Naive thymus-derived CD4-positive, alpha-beta T cell (primary cell): ENCODE measurements at regions of chr10 and their contacts with region 1.

Region 1: GRCh38 chr10:90871766-90872647 is at the start of gene RPP30:
- DNase-seq: peak; percentile 71 to 83 (median 77)
- ATAC-seq: peak; percentile 99
- H3K4me3 ChIP-seq: peak within 1 kb of the TSS; percentile 83
- H3K4me3 Mint-ChIP-seq: peak within 1 kb of the TSS; percentile 94 to 99 (median 98)
- H3K27ac ChIP-seq: peak within 1 kb of the TSS; percentile 71
- H3K27ac Mint-ChIP-seq: peak within 1 kb of the TSS; percentile 73 to 95 (median 88)
- H3K4me1 ChIP-seq: peaks cover 14 to 23% of the 10 kb centered on the region in 2 donors
- H3K4me1 Mint-ChIP-seq: peaks cover 24 to 53% (median 37%) of the 10 kb centered on the region in 7 donors
- H3K27me3 ChIP-seq: no peaks in the 10 kb centered on the region
- H3K27me3 Mint-ChIP-seq: peaks cover 22 to 40% (median 34%) of the 10 kb centered on the region in 5 donors
- total RNA-seq, gene RPP30: 24.1 to 45.6 (median 38.0) TPM

Region 2: DNA sequence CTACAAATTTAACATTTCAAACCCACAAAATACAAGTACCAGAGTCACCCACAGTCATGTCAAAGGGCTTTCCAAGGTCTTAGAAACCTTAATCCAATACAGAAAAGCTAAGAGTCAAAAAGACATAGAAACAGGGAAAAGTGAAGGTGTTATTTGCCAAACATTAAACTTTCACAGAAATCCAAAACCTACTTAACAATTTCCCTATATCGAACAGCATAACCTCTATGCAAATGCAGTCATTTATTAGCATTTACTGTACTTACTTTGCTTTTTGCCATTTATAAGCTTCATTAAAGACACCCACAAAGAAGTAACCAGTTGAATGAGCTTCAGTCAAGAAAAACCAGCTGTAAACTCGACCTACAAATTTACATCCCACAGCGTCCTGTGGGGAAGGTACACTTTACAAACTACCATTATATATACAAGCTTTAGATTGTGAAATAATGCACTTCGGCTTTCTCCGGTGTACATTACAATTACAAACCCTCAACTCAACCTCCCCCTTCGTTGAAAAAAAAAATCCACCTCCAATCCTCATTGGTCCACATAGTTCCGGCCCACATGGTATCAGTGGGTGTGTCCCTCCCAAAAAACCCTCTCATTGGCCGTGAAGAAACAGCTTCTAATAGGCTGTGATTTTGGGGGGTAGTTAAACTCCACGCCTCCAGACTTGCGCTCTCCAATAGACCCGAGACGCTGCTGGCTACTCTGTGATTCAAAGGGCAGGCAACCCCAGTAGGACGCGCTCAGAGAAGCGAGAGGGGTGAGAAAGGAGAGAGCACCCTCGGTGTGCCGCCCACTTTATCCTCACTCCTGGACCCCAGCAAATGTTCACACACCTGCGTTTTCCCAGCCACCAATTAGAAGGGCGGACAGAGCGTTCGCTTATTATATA is 1228.3 kb before region 1 on chr10:
- CTCF ChIA-PET with region 1: no interaction called
- POLR2A ChIA-PET with region 1: no interaction called
- intact Hi-C with region 1: loop called (anchors 1 to 5 kb)
- DNase-seq: peak; percentile 22 to 78 (median 68)
- ATAC-seq: peak; percentile 94
- H3K4me3 ChIP-seq: peak overlapping the region; percentile 76
- H3K4me3 Mint-ChIP-seq: no peak overlapping the region
- H3K27ac ChIP-seq: peak overlapping the region; percentile 55
- H3K27ac Mint-ChIP-seq: peak overlapping the region in 2 of 9 donors; percentile 4 to 72
- H3K4me1 ChIP-seq: peaks cover 0 to 6% of the 10 kb centered on the region in 2 donors
- H3K4me1 Mint-ChIP-seq: peaks cover 6 to 13% (median 8%) of the 10 kb centered on the region in 7 donors
- H3K27me3 ChIP-seq: no peaks in the 10 kb centered on the region
- H3K27me3 Mint-ChIP-seq: peaks cover 0 to 23% (median 6%) of the 10 kb centered on the region in 5 donors

Region 3: DNA sequence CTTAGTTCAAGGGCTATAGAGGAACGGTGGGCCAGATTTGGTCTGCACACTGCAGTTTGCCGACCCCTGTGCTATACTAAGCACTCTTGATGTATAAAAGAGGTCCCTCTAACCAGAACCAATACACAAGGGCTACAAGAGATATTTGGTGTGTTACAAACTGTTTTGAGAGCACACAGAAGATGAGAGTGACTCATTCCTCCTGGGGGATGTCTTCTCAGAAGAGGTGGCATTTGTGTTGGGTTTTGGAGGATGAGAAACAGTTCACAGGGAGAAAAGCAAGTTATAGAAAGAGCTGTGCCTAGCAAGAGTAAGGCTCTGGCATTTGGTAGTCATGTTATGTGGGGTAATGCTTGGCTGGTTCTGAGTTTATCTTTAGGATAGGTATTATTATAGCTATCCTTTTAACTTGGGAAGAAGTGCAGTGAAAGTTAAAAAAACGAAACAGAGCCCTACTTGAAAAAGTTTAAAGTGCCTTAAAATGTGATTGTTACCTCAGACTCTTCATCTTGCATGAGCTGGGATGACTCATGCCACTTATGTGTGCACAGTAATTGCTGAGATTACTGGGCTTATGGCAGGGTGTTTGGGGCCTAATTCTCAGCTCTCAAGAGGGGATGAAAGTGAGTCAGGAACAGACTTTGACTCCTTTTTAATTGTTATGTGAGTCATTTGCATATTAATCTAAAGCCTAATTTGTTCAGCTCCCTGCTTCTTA is 1010.3 kb before region 1 on chr10:
- CTCF ChIA-PET with region 1: no interaction called
- POLR2A ChIA-PET with region 1: no interaction called
- intact Hi-C with region 1: loop called in 1 of 2 experiments (anchors 5 kb)
- DNase-seq: no peak
- ATAC-seq: no peak
- H3K4me3 ChIP-seq: no peak overlapping the region
- H3K4me3 Mint-ChIP-seq: peak overlapping the region in 6 of 10 donors; percentile 14 to 83 (median 74)
- H3K27ac ChIP-seq: no peak overlapping the region
- H3K27ac Mint-ChIP-seq: peak overlapping the region in 7 of 9 donors; percentile 6 to 86 (median 66)
- H3K4me1 ChIP-seq: peaks cover 0 to 12% of the 10 kb centered on the region in 2 donors
- H3K4me1 Mint-ChIP-seq: peaks cover 9 to 23% (median 16%) of the 10 kb centered on the region in 7 donors
- H3K27me3 ChIP-seq: no peaks in the 10 kb centered on the region
- H3K27me3 Mint-ChIP-seq: peaks cover 0 to 7% (median 0%) of the 10 kb centered on the region in 5 donors

Region 4: GRCh38 chr10:90526721-90527120 is 345.3 kb before region 1 on chr10:
- CTCF ChIA-PET with region 1: no interaction called
- POLR2A ChIA-PET with region 1: no interaction called
- intact Hi-C with region 1: no loop called
- DNase-seq: no peak
- ATAC-seq: no peak
- H3K4me3 ChIP-seq: no peak overlapping the region
- H3K4me3 Mint-ChIP-seq: no peak overlapping the region
- H3K27ac ChIP-seq: no peak overlapping the region
- H3K27ac Mint-ChIP-seq: no peak overlapping the region
- H3K4me1 ChIP-seq: no peaks in the 10 kb centered on the region
- H3K4me1 Mint-ChIP-seq: no peaks in the 10 kb centered on the region
- H3K27me3 ChIP-seq: no peaks in the 10 kb centered on the region
- H3K27me3 Mint-ChIP-seq: peaks cover 0 to 16% (median 4%) of the 10 kb centered on the region in 5 donors

Region 5: DNA sequence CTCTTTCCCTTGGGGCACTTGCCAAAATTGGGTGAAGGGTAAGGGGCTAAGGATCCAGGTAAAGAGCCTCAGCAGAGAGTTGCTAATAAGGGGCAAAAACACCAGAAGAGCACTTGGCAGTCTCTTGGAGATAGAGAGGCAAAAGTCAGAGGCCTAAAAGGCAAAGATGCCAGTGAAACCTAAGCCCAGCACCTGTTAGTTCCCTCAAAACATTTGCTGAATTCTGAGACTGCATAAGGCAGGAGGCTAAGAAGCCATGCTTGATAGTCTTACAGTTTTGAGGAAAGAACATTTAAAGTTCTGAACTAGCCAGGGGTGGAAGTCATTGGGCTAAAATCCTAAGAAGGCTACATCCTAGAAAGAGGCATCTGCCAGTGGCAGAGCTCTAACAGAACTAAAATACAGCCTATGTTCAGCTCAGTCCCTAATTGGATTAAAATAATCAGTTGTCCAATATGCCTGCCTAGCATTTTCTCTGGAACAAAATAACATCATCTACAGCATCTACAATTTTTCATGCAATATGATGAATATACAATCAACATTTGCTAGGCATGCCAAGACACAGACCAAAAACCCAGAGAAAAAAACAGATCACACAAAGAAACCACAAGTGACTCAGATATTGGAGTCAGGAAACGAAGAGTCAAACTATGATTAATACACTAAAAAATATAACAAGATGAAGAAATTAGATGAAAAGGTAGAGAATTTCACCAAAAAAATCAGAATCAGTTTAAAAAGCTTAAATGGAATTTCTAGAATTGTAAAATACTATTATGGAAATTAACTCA is 21.9 kb before region 1 on chr10:
- CTCF ChIA-PET with region 1: no interaction called
- POLR2A ChIA-PET with region 1: no interaction called
- intact Hi-C with region 1: no loop called
- DNase-seq: no peak
- ATAC-seq: no peak
- H3K4me3 ChIP-seq: no peak overlapping the region
- H3K4me3 Mint-ChIP-seq: no peak overlapping the region
- H3K27ac ChIP-seq: no peak overlapping the region
- H3K27ac Mint-ChIP-seq: no peak overlapping the region
- H3K4me1 ChIP-seq: no peaks in the 10 kb centered on the region
- H3K4me1 Mint-ChIP-seq: peaks cover 0 to 7% (median 0%) of the 10 kb centered on the region in 7 donors
- H3K27me3 ChIP-seq: peaks cover 0 to 7% of the 10 kb centered on the region in 2 donors
- H3K27me3 Mint-ChIP-seq: peaks cover 30 to 64% (median 54%) of the 10 kb centered on the region in 5 donors

Region 6: GRCh38 chr10:91071786-91072185 is 199.8 kb after region 1 on chr10:
- CTCF ChIA-PET with region 1: no interaction called
- POLR2A ChIA-PET with region 1: no interaction called
- intact Hi-C with region 1: no loop called
- DNase-seq: no peak
- ATAC-seq: no peak
- H3K4me3 ChIP-seq: no peak overlapping the region
- H3K4me3 Mint-ChIP-seq: no peak overlapping the region
- H3K27ac ChIP-seq: no peak overlapping the region
- H3K27ac Mint-ChIP-seq: no peak overlapping the region
- H3K4me1 ChIP-seq: no peaks in the 10 kb centered on the region
- H3K4me1 Mint-ChIP-seq: peaks cover 0 to 2% (median 0%) of the 10 kb centered on the region in 7 donors
- H3K27me3 ChIP-seq: no peaks in the 10 kb centered on the region
- H3K27me3 Mint-ChIP-seq: peaks cover 8 to 19% (median 8%) of the 10 kb centered on the region in 5 donors

Region 7: GRCh38 chr10:91163269-91163868 is 291.4 kb after region 1 on chr10:
- CTCF ChIA-PET with region 1: no interaction called
- POLR2A ChIA-PET with region 1: interaction called, 4 read pairs
- intact Hi-C with region 1: loop called (anchors 1 to 2 kb)
- DNase-seq: peak; percentile 72 to 92 (median 88)
- ATAC-seq: peak; percentile 75
- H3K4me3 ChIP-seq: peak overlapping the region; percentile 74
- H3K4me3 Mint-ChIP-seq: peak overlapping the region; percentile 88 to 95 (median 93)
- H3K27ac ChIP-seq: peak overlapping the region; percentile 96
- H3K27ac Mint-ChIP-seq: peak overlapping the region; percentile 88 to 98 (median 95)
- H3K4me1 ChIP-seq: peaks cover 8 to 20% of the 10 kb centered on the region in 2 donors
- H3K4me1 Mint-ChIP-seq: peaks cover 27 to 61% (median 51%) of the 10 kb centered on the region in 7 donors
- H3K27me3 ChIP-seq: no peaks in the 10 kb centered on the region
- H3K27me3 Mint-ChIP-seq: peaks cover 0 to 19% (median 0%) of the 10 kb centered on the region in 5 donors

Region 8: DNA sequence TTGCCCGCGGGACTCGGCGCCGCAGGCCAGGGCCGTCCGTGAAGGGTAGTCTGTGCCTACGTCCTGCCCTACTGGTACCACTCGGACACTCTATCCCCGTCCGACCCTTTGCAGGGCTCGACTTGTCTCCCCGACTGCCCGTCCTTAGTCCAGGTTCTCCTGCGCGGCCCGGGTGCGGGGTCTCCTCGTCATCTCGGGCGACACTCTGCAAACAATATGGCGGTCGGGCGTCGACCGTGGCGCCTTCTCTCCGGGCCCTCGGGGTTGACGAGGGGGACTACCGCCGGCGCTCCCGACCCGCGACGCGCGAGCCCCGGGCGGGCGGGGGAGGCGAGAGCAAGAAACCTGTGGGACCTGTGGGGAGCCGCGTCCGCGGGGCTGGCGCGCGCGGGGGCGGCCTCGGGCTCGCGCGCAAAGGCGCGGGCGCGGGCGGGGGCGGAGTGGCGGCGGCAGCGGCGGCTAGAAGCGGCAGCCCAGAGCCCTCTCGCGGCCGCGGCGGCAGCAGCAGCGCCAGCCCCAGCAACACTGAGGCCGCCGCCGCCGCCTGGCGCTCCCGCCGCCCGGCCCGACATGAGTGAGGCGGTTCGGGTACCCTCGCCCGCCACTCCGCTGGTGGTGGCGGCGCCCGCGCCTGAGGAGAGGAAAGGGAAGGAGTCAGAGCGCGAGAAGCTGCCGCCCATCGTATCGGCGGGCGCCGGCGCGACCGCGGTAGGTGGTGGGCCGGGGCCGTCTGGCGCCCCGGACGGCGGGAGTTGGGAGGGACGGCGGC is 538.0 kb after region 1 on chr10 and contains the start of gene HECTD2:
- CTCF ChIA-PET with region 1: no interaction called
- POLR2A ChIA-PET with region 1: interaction called, 3 read pairs
- intact Hi-C with region 1: loop called (anchors 1 to 2 kb)
- DNase-seq: peak; percentile 76 to 89 (median 86)
- ATAC-seq: peak; percentile 93
- H3K4me3 ChIP-seq: peak within 1 kb of the TSS; percentile 83
- H3K4me3 Mint-ChIP-seq: peak within 1 kb of the TSS; percentile 75 to 93 (median 90)
- H3K27ac ChIP-seq: peak within 1 kb of the TSS; percentile 88
- H3K27ac Mint-ChIP-seq: peak within 1 kb of the TSS; percentile 81 to 96 (median 91)
- H3K4me1 ChIP-seq: peaks cover 8 to 17% of the 10 kb centered on the region in 2 donors
- H3K4me1 Mint-ChIP-seq: peaks cover 8 to 18% (median 13%) of the 10 kb centered on the region in 7 donors
- H3K27me3 ChIP-seq: no peaks in the 10 kb centered on the region
- H3K27me3 Mint-ChIP-seq: peaks cover 0 to 27% (median 0%) of the 10 kb centered on the region in 5 donors
- total RNA-seq, gene HECTD2: 1.1 to 4.6 (median 2.0) TPM

Region 9: GRCh38 chr10:92290837-92291615 is 1419.0 kb after region 1 on chr10 and contains the starts of genes CPEB3 and MARCHF5:
- CTCF ChIA-PET with region 1: no interaction called
- POLR2A ChIA-PET with region 1: no interaction called
- intact Hi-C with region 1: loop called in 1 of 2 experiments (anchors 2 kb)
- DNase-seq: peak; percentile 77 to 92 (median 85)
- ATAC-seq: peak; percentile 99
- H3K4me3 ChIP-seq: peak within 1 kb of the TSS; percentile 90
- H3K4me3 Mint-ChIP-seq: peak within 1 kb of the TSS; percentile 85 to 97 (median 95)
- H3K27ac ChIP-seq: peak within 1 kb of the TSS; percentile 90
- H3K27ac Mint-ChIP-seq: peak within 1 kb of the TSS; percentile 75 to 96 (median 88)
- H3K4me1 ChIP-seq: peaks cover 0 to 6% of the 10 kb centered on the region in 2 donors
- H3K4me1 Mint-ChIP-seq: peaks cover 21 to 41% (median 31%) of the 10 kb centered on the region in 7 donors
- H3K27me3 ChIP-seq: no peaks in the 10 kb centered on the region
- H3K27me3 Mint-ChIP-seq: no peaks in the 10 kb centered on the region
- total RNA-seq, gene CPEB3: 2.0 to 3.3 (median 2.2) TPM
- total RNA-seq, gene MARCHF5: 22.0 to 37.1 (median 33.8) TPM

Region 10: DNA sequence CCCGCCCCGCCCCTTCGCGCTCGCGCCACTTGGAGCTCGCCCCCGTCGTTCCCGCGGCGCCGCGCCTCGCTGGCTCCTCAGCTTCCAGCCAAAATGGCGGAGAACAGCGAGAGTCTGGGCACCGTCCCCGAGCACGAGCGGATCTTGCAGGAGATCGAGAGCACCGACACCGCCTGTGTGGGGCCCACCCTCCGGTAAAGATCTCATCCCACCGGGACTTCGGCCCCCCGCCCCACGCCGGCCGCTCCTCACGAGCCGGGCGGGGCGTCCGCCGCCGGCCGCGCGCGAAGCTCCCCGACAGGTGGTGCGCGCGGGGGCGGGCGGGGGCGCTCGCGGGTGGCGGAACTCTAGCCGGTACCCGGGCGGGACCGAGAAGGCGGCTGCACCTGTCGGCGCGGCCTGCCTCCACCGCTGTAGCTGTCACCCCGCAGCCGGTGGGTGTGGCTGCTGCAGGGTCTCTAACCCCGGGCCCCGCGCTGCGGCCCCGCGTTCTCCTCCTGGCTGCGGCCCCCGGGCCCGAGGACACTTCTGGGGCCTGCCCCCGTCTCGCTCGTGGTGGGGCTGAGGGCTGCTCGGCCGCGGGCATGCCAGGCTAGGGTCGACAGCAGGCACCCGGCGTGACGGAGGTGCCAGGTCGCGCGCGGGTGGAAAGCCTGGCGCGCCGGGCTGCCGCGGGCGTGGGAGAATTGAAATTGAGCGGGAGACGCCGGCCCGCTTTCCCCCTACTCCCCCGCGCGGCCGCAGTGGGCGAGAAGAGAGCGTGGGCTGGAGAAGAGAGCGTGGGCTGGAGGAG is 1976.6 kb after region 1 on chr10 and contains the start of gene EXOC6:
- CTCF ChIA-PET with region 1: no interaction called
- POLR2A ChIA-PET with region 1: no interaction called
- intact Hi-C with region 1: loop called in 1 of 2 experiments (anchors 10 kb)
- DNase-seq: peak; percentile 78 to 93 (median 91)
- ATAC-seq: peak; percentile 91
- H3K4me3 ChIP-seq: peak within 1 kb of the TSS; percentile 70
- H3K4me3 Mint-ChIP-seq: peak within 1 kb of the TSS; percentile 81 to 94 (median 91)
- H3K27ac ChIP-seq: peak within 1 kb of the TSS; percentile 95
- H3K27ac Mint-ChIP-seq: peak within 1 kb of the TSS; percentile 56 to 95 (median 92)
- H3K4me1 ChIP-seq: peaks cover 7 to 19% of the 10 kb centered on the region in 2 donors
- H3K4me1 Mint-ChIP-seq: peaks cover 4 to 48% (median 36%) of the 10 kb centered on the region in 7 donors
- H3K27me3 ChIP-seq: no peaks in the 10 kb centered on the region
- H3K27me3 Mint-ChIP-seq: no peaks in the 10 kb centered on the region
- total RNA-seq, gene EXOC6: 8.1 to 12.1 (median 11.4) TPM